Naive thymus-derived CD4-positive, alpha-beta T cell (primary cell): ENCODE measurements at regions of chr19 and their contacts with region 1.

Region 1: GRCh38 chr19:2475702-2476450 is at the start of gene GADD45B:
- DNase-seq: peak; percentile 91 to 98 (median 97)
- ATAC-seq: peak; percentile 87
- H3K4me3 ChIP-seq: peak within 1 kb of the TSS; percentile 91
- H3K4me3 Mint-ChIP-seq: peak within 1 kb of the TSS; percentile 97 to 100 (median 99)
- H3K27ac ChIP-seq: peak within 1 kb of the TSS; percentile 90
- H3K27ac Mint-ChIP-seq: peak within 1 kb of the TSS; percentile 92 to 99 (median 96)
- H3K4me1 ChIP-seq: peaks cover 0 to 14% of the 10 kb centered on the region in 2 donors
- H3K4me1 Mint-ChIP-seq: peaks cover 7 to 20% (median 16%) of the 10 kb centered on the region in 7 donors
- H3K27me3 ChIP-seq: no peaks in the 10 kb centered on the region
- H3K27me3 Mint-ChIP-seq: peaks cover 0 to 10% (median 0%) of the 10 kb centered on the region in 5 donors
- total RNA-seq, gene GADD45B: 71.7 to 157 (median 84.2) TPM

Region 2: DNA sequence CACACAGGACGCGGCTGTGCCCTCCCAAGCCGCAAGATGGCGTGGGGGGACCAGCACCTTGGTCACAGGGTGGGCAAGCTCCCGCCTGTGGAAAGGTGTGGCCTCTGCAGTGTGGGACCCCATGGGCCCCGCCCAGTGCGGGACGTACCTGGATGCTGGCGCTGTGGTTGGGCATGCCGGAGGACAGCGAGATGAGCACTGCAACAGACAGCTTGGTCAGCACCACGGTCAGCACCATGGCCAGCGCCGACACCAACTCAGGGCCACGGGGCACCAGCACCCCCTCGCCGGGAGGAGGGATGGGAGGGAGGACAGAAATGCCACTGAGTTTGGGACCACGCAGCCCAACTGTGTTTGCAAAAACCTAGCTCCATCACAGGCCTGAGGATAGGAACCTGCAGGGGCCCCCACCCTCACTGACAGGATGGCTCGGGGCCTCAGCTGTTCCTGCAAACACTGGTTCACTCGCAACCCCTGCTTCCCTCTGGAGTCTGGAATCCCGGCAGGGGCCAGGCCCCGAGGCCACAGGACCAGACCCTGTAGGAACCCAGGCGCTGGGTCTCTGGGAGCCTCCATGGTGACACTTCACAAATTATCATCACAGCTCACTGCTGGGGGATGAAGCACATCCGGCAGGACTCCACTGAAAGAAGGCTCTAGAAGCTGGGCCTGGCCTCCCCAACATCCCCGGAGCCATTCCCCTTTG is 352.0 kb before region 1 on chr19:
- CTCF ChIA-PET with region 1: no interaction called
- POLR2A ChIA-PET with region 1: no interaction called
- intact Hi-C with region 1: no loop called
- DNase-seq: no peak
- ATAC-seq: no peak
- H3K4me3 ChIP-seq: no peak overlapping the region
- H3K4me3 Mint-ChIP-seq: no peak overlapping the region
- H3K27ac ChIP-seq: no peak overlapping the region
- H3K27ac Mint-ChIP-seq: no peak overlapping the region
- H3K4me1 ChIP-seq: no peaks in the 10 kb centered on the region
- H3K4me1 Mint-ChIP-seq: peaks cover 0 to 2% (median 0%) of the 10 kb centered on the region in 7 donors
- H3K27me3 ChIP-seq: no peaks in the 10 kb centered on the region
- H3K27me3 Mint-ChIP-seq: no peaks in the 10 kb centered on the region

Region 3: DNA sequence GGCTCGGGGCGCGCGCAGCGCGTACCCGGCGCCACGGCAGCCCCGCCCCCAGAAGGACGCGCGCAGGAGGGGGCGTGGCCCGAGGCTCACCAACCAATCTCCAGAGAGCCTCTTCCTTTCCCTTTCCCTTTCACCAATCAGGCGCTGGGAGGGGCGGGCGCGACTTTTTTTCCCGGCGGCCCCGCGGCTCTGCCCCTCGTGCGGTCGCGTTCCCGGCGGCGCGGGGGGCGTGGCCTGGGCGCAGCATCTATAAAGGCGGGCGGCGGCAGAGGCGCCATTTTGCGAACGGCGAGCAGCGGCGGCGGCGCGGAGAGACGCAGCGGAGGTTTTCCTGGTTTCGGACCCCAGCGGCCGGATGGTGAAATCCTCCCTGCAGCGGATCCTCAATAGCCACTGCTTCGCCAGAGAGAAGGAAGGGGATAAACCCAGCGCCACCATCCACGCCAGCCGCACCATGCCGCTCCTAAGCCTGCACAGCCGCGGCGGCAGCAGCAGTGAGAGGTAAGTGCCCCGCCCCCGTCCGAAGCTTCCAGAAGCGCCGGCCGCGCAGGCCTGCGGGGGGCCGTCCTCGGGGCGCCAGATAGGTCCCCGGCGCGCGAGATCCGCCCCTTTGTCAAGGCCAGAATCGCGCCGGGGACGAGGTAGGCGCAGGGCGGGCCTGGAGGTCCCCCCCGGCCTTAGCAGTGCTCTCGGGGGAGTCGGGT is 206.5 kb before region 1 on chr19:
- CTCF ChIA-PET with region 1: no interaction called
- POLR2A ChIA-PET with region 1: interaction called, 7 read pairs
- intact Hi-C with region 1: loop called in 1 of 2 experiments (anchors 5 kb)
- DNase-seq: peak; percentile 98 to 100 (median 99)
- ATAC-seq: peak; percentile 90
- H3K4me3 ChIP-seq: peak overlapping the region; percentile 96
- H3K4me3 Mint-ChIP-seq: peak overlapping the region; percentile 86 to 96 (median 90)
- H3K27ac ChIP-seq: peak overlapping the region; percentile 87
- H3K27ac Mint-ChIP-seq: peak overlapping the region; percentile 72 to 94 (median 89)
- H3K4me1 ChIP-seq: peaks cover 32 to 34% of the 10 kb centered on the region in 2 donors
- H3K4me1 Mint-ChIP-seq: peaks cover 28 to 52% (median 35%) of the 10 kb centered on the region in 7 donors
- H3K27me3 ChIP-seq: no peaks in the 10 kb centered on the region
- H3K27me3 Mint-ChIP-seq: no peaks in the 10 kb centered on the region

Region 4: GRCh38 chr19:2446271-2446779 is 29.6 kb before region 1 on chr19:
- CTCF ChIA-PET with region 1: no interaction called
- POLR2A ChIA-PET with region 1: no interaction called
- intact Hi-C with region 1: no loop called
- DNase-seq: peak in 7 of 9 donors; percentile 21 to 60 (median 40)
- ATAC-seq: peak; percentile 74
- H3K4me3 ChIP-seq: peak overlapping the region; percentile 29
- H3K4me3 Mint-ChIP-seq: peak overlapping the region; percentile 70 to 87 (median 80)
- H3K27ac ChIP-seq: peak overlapping the region; percentile 29
- H3K27ac Mint-ChIP-seq: peak overlapping the region; percentile 29 to 91 (median 76)
- H3K4me1 ChIP-seq: no peaks in the 10 kb centered on the region
- H3K4me1 Mint-ChIP-seq: peaks cover 5 to 20% (median 13%) of the 10 kb centered on the region in 7 donors
- H3K27me3 ChIP-seq: no peaks in the 10 kb centered on the region
- H3K27me3 Mint-ChIP-seq: no peaks in the 10 kb centered on the region

Region 5: DNA sequence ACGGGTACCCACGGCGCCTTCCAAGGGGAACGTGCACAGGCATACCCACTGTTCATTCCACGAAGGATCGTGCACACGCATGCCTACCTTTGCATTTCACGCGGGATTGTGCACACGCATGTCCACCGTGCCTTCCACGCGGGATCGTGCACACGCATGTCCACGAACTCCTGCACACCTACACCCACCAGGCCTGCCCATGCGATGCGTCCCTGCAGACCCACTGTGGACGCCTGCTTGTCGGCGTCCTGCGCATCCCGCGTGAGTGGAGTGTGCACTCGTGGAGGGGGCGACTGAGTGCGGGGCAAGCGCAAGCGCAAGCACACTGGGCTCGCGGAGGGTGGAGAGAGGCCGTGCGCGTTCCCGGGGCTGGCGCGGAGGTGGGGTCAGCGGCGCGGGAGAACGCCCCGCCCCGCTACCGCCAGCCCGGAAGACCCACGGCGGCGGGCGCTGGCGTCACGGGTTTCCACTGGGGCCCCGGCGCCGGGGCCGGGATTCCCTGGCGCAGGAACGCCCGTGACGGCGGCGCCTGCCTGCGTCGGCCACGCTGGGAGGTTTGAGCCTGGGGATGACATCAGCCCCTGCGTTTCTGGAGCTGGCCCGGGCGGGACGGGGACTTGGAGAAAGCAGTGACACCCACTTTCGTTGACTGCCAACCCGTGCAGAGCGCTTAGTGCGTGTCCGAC is 18.7 kb after region 1 on chr19:
- CTCF ChIA-PET with region 1: interaction called, 4 read pairs
- POLR2A ChIA-PET with region 1: interaction called, 81 read pairs
- intact Hi-C with region 1: loop called in 1 of 2 experiments (anchors 1 kb)
- DNase-seq: peak in 8 of 9 donors; percentile 22 to 75 (median 33)
- ATAC-seq: peak; percentile 73
- H3K4me3 ChIP-seq: peak overlapping the region; percentile 77
- H3K4me3 Mint-ChIP-seq: peak overlapping the region; percentile 67 to 87 (median 77)
- H3K27ac ChIP-seq: peak overlapping the region; percentile 69
- H3K27ac Mint-ChIP-seq: peak overlapping the region in 4 of 9 donors; percentile 19 to 65 (median 43)
- H3K4me1 ChIP-seq: peaks cover 7 to 14% of the 10 kb centered on the region in 2 donors
- H3K4me1 Mint-ChIP-seq: peaks cover 4 to 38% (median 30%) of the 10 kb centered on the region in 7 donors
- H3K27me3 ChIP-seq: peaks cover 2 to 4% of the 10 kb centered on the region in 2 donors
- H3K27me3 Mint-ChIP-seq: peaks cover 20 to 52% (median 24%) of the 10 kb centered on the region in 5 donors

Region 6: DNA sequence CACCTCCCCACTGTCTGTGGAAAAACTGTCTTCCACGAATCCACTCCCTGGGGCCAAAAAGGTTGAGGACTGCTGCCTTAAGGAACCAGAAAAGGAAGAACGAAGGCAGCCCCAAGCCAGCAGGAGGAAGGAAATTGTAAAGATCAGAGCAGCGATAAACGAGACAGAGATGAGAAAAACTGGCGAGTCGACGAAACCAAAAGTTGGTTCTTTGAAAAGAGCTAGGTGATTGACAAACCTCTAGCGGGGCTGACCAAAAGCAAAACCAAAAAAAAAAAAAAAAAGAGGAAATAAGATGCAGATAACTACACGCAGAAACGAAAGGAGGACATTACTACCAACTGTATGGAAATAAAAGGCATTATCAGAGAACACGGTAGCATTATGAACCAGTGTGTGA is 77.0 kb after region 1 on chr19:
- CTCF ChIA-PET with region 1: interaction called, 6 read pairs
- POLR2A ChIA-PET with region 1: interaction called, 67 read pairs
- intact Hi-C with region 1: loop called (anchors 2 kb)
- DNase-seq: peak in 8 of 9 donors; percentile 48 to 77 (median 66)
- ATAC-seq: peak; percentile 82
- H3K4me3 ChIP-seq: peak overlapping the region; percentile 8
- H3K4me3 Mint-ChIP-seq: peak overlapping the region; percentile 67 to 93 (median 83)
- H3K27ac ChIP-seq: peak overlapping the region; percentile 59
- H3K27ac Mint-ChIP-seq: peak overlapping the region; percentile 48 to 86 (median 81)
- H3K4me1 ChIP-seq: peaks cover 10 to 12% of the 10 kb centered on the region in 2 donors
- H3K4me1 Mint-ChIP-seq: peaks cover 15 to 34% (median 20%) of the 10 kb centered on the region in 7 donors
- H3K27me3 ChIP-seq: no peaks in the 10 kb centered on the region
- H3K27me3 Mint-ChIP-seq: no peaks in the 10 kb centered on the region

Region 7: DNA sequence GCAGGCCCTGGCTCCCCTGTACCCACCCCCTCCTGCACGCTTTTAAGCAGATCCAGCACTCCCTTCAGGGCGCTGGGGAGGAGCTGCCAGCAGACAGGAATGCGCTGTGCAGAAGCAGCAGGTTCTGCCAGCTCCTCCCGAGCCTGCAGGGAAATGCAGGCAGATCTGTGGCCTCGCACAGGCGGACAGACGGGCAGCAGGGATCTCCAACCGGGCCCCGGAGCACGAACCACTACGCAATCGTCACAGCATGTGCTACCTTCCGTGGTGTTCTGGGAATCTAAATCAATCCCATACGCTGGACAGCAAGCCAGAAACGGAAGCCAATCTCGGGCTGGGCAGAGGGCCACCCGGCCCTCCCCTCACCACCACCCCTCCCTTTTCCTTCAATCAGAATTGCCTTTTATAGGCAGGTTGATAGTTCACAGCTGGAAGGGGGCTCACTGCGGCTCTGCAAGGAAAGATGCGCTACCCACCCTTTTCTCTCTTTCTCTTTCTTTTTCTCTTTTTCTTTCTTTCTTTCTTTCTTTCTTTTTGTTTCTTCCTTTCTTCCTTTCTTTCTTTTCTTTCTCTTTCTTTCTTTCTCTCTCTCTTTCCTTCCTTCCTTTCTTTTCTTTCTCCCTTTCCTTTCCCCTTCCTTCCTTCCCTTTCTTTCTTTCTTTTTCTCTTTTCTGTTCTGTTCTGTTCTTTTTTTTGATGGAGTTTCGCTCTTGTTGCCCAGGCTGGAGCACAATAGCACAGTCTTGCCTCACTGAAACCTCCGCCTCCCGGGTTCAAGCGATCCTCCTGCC is 126.7 kb after region 1 on chr19:
- CTCF ChIA-PET with region 1: interaction called, 78 read pairs
- POLR2A ChIA-PET with region 1: interaction called, 415 read pairs
- intact Hi-C with region 1: loop called (anchors 1 kb)
- DNase-seq: peak in 1 of 9 donors; percentile 19
- ATAC-seq: no peak
- H3K4me3 ChIP-seq: no peak overlapping the region
- H3K4me3 Mint-ChIP-seq: no peak overlapping the region
- H3K27ac ChIP-seq: no peak overlapping the region
- H3K27ac Mint-ChIP-seq: peak overlapping the region in 2 of 9 donors; percentile 33 to 74
- H3K4me1 ChIP-seq: peaks cover under 1 to 2% of the 10 kb centered on the region in 2 donors
- H3K4me1 Mint-ChIP-seq: peaks cover 7 to 17% (median 12%) of the 10 kb centered on the region in 7 donors
- H3K27me3 ChIP-seq: no peaks in the 10 kb centered on the region
- H3K27me3 Mint-ChIP-seq: peaks cover 0 to 8% (median 0%) of the 10 kb centered on the region in 5 donors

Region 8: DNA sequence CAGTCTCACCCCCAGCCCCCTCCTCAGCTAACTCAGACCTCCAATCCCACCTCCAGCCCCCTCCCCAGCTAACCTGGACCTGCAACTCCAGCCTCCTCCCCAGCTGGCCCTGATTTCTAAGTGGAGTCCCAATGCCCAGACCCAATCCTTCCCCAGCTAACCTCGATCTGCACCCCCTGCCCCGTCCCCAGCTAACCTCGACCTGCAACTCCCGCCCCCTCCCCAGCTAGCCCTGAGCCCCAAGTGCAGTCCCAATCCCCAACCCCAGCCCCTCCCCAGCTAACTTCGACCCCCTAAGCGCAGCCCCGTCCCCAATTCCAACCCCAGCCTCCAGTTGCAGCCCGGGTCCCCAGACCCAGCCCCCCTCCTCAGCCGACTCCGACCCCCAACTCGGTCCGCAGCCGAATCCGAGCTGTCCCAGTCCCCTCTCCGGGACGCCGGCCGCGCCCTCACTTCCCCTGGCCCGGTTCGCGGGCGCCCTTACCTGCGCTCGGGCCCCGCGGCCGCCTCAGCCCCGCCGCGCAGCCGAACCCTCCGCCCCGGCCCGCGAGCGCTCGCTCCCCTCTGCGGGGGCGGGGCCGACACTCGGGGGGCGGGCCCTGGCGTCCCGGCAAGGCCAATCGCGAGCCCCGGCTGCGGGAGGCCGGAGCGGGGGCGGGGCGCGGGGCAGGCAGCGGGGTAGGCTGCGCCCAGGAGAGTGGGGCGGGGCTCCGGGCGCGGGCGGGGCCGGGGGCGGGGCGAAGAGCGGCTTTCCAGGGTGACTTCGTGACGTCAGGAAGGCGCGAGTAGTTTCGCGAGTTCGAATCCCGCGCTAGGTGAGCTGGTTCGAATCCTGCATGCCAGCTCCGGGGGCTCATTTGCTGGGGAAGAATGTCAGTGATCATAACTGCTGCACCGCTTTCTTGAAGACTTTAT is 226.5 kb after region 1 on chr19 and contains the start of gene GNG7:
- CTCF ChIA-PET with region 1: no interaction called
- POLR2A ChIA-PET with region 1: interaction called, 11 read pairs
- intact Hi-C with region 1: no loop called
- DNase-seq: peak; percentile 92 to 98 (median 96)
- ATAC-seq: peak; percentile 100
- H3K4me3 ChIP-seq: peak within 1 kb of the TSS; percentile 39
- H3K4me3 Mint-ChIP-seq: peak within 1 kb of the TSS; percentile 69 to 87 (median 78)
- H3K27ac ChIP-seq: peak within 1 kb of the TSS; percentile 67
- H3K27ac Mint-ChIP-seq: peak within 1 kb of the TSS; percentile 23 to 90 (median 72)
- H3K4me1 ChIP-seq: peaks cover 0 to 16% of the 10 kb centered on the region in 2 donors
- H3K4me1 Mint-ChIP-seq: peaks cover 6 to 41% (median 39%) of the 10 kb centered on the region in 7 donors
- H3K27me3 ChIP-seq: no peaks in the 10 kb centered on the region
- H3K27me3 Mint-ChIP-seq: peaks cover 0 to 12% (median 0%) of the 10 kb centered on the region in 5 donors
- total RNA-seq, gene GNG7: 0.31 to 6.8 (median 6.6) TPM